ENCODE measurements at regions of chr14 and their contacts with region 1.

Region 1: DNA sequence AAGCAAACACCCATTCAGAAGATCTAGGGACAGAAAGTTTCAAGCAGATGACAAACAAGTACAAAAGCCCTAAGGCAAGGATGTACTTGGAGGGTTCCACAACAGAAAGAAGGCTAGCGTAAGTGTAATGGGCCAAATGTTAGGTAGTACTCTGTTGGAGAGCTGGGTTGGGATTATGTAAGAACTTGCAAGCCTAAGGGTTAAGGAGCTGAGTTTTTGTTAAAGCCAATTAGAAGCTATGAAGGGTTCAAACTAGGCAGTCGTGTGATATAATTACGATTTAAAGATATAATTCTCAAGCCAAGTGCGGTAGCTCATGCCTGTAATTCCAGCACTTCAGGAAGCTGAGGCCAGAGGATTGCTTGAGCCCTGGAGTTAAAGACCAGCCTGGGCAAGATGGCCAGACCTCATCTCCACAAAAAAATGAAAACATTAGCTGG is 41.3 kb downstream of the HECTD1 start:
- DNase-seq: no peak
- H3K4me3 ChIP-seq: no peak overlapping the region
- H3K27ac ChIP-seq: peak overlapping the region; percentile 78 to 80
- H3K4me1 ChIP-seq: peaks cover 0 to 38% (median 14%) of the 10 kb centered on the region in 4 donors
- H3K27me3 ChIP-seq: no peaks in the 10 kb centered on the region
- CTCF ChIP-seq: no peak

Region 2: DNA sequence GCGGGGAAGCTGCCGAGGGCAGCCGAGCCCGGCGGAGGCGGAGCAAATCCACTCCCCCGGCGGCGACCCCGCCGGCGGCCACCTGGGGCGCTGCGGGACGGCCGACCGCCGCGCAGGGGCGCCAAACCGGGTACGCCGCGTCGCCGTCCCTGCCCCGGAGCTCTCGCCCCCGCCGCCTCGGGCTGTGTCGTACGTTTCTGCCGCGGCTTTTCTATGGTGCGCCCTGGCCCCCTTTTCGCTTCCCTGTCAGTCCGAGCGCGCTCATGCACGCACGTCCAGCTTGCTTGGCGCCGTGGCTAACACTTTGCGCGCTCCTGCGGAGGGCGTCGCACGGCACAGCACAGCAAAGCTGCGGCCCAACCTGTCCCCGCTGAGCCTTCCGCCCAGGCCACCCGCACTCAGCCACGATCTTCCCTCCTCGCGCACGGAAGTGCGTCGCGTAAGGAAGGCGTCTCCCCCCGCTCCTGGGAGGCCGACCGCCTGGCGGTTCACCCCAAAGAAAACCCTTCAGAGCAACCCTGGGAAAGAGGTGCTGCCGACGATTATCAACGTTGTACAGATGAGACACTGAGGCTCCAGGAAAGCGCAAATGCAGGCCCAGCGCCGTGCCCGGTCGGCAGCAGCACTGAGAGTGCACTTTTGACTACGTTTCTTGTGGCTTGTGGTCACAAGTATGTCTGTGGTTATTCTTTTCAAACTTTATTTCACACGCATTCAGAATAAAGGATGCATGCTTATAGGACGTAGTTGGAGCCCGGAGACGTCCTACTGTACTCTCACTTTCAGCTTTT is 41.7 kb after region 1 on chr14 and contains the start of gene HECTD1:
- intact Hi-C with region 1: loop called (anchors 2 kb)
- DNase-seq: peak; percentile 72 to 95
- H3K4me3 ChIP-seq: peak within 1 kb of the TSS; percentile 78 to 90
- H3K27ac ChIP-seq: peak within 1 kb of the TSS; percentile 98 to 100
- H3K4me1 ChIP-seq: peaks cover 0 to 38% (median 14%) of the 10 kb centered on the region in 4 donors
- H3K27me3 ChIP-seq: no peaks in the 10 kb centered on the region
- CTCF ChIP-seq: peak; percentile 77 to 88

Measured in tibial artery (tissue), 4 donors.